CD4-positive, alpha-beta T cell (primary cell): ENCODE measurements at regions of chr9 and their contacts with region 1.

Region 1: DNA sequence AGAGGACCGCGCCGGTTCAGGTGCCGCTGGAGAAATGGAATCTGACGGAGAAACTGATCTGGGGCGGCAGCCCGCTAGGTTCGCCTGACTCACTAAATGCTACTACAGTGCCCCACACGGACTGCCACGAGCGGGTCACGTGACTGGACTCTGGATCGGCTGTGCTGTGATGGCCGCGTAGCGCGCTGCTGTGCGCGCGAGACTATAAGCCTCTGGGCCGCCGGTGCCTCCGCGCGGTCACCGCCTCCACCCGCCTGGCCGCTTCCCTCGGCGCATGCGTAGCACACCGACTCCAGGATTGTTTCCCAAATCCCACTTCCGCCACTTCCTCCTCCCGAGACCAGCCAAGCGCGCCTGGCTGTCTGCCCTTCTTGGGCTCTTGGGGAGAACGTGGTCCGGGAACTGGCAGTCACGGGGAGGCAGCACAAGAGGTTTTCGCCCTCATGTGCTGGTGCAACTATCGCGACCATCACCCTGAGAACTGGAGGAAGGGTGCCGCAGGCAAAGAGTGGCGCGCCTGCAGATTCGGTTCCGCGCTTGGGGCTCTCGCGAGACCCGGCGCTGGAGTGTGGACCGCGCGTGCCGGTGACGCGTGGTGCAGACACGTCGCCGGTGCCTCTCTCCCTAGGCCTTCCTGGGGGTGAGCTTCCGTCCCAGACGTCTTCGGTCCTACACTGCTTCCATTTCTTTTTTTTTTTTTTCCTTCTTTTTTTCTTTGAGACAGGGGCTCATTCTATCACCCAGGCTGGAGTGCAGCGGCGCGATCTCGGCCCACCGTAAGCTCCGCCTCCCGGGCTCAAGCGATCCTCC is 35.8 kb upstream of the GLDC start:
- DNase-seq: peak; percentile 82 to 97 (median 88)
- ATAC-seq: peak; percentile 90
- H3K4me3 ChIP-seq: peak overlapping the region; percentile 85
- H3K4me3 Mint-ChIP-seq: peak overlapping the region; percentile 89
- H3K27ac ChIP-seq: peak overlapping the region; percentile 96 to 98
- H3K27ac Mint-ChIP-seq: peak overlapping the region; percentile 99
- H3K4me1 ChIP-seq: peaks cover 23% of the 10 kb centered on the region
- H3K4me1 Mint-ChIP-seq: peaks cover 17% of the 10 kb centered on the region
- H3K27me3 ChIP-seq: no peaks in the 10 kb centered on the region
- H3K27me3 Mint-ChIP-seq: no peaks in the 10 kb centered on the region
- CTCF ChIP-seq: no peak

Region 2: DNA sequence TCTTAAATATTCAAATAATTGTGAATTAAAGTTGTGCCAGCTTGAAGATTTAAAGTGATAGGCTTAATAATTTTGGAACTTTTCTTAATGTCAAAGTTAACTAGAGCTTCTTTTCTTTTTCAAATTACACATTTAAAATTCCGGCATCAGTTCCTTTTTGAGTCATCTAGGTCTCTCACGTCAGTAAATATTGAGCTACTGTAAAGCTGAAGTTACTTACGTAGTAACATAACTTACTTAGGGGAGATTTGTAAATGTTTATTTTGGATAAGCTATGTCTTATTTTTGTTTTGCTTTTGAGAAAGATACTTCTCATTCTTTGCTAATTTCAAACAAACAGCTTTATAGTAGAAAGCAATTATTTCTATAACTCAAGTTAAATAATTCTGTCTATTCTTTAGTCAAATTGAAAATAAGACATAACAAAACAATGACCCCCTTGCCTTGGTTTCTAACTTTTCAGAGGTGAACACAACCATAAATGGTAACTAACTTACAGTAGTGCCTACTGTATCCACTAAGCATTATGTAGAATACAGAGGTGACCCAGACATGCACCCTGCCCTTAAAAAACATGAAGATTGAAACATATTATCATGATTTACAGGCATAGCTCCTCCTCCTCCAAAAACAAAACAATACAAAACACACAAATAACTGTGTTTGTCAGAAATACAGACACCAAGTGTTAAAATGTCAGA is 1201.2 kb before region 1 on chr9:
- CTCF ChIA-PET with region 1: no interaction called
- POLR2A ChIA-PET with region 1: no interaction called
- intact Hi-C with region 1: no loop called
- DNase-seq: no peak
- ATAC-seq: no peak
- H3K4me3 ChIP-seq: no peak overlapping the region
- H3K4me3 Mint-ChIP-seq: no peak overlapping the region
- H3K27ac ChIP-seq: no peak overlapping the region
- H3K27ac Mint-ChIP-seq: no peak overlapping the region
- H3K4me1 ChIP-seq: no peaks in the 10 kb centered on the region
- H3K4me1 Mint-ChIP-seq: no peaks in the 10 kb centered on the region
- H3K27me3 ChIP-seq: no peaks in the 10 kb centered on the region
- H3K27me3 Mint-ChIP-seq: no peaks in the 10 kb centered on the region
- CTCF ChIP-seq: no peak

Region 3: DNA sequence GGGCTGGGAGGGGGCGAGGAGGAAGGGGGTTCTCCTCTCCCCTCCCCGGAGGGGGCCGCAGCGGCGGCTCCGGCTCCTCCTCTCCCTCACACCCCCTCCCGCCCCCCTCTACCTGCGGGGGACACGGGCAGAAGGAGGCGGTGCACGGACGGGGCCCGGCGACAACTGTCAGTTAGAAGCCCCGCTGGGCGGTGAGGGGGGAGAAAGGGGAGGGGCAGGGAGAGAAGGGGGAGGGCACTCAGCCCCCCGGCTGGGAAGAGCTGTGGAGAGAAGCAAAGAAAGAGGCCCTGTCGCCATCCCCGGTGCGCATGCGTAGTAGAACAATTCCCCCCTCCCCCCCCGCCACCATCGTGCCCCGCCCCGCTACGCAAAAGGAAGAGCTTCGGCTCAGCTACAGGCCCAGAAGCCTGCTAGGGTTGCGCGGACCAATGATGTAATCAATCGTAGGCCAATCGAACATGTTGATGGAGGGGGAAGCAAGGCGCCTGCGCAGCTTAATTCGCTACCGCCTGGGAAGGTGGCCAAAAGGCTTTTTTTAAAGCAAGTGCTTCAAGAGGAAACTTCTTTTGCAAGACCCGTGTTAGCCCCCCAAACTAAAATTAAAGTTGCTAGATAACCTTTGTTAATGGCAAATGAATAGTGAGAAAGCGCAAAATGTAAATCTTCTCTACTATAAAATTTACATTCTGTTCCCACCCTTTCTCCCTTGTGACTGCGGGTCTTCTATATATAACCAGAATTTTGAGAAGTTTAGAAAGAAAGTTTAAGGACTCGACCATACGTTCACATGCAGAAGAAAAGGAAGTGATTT is 673.0 kb before region 1 on chr9:
- CTCF ChIA-PET with region 1: no interaction called
- POLR2A ChIA-PET with region 1: interaction called, 8 read pairs
- intact Hi-C with region 1: loop called in 1 of 2 experiments (anchors 2 kb)
- DNase-seq: peak; percentile 88 to 99 (median 92)
- ATAC-seq: peak; percentile 70
- H3K4me3 ChIP-seq: peak overlapping the region; percentile 87
- H3K4me3 Mint-ChIP-seq: peak overlapping the region; percentile 91
- H3K27ac ChIP-seq: peak overlapping the region; percentile 91 to 95
- H3K27ac Mint-ChIP-seq: peak overlapping the region; percentile 97
- H3K4me1 ChIP-seq: peaks cover 11% of the 10 kb centered on the region
- H3K4me1 Mint-ChIP-seq: peaks cover 70% of the 10 kb centered on the region
- H3K27me3 ChIP-seq: no peaks in the 10 kb centered on the region
- H3K27me3 Mint-ChIP-seq: no peaks in the 10 kb centered on the region
- CTCF ChIP-seq: no peak

Region 4: DNA sequence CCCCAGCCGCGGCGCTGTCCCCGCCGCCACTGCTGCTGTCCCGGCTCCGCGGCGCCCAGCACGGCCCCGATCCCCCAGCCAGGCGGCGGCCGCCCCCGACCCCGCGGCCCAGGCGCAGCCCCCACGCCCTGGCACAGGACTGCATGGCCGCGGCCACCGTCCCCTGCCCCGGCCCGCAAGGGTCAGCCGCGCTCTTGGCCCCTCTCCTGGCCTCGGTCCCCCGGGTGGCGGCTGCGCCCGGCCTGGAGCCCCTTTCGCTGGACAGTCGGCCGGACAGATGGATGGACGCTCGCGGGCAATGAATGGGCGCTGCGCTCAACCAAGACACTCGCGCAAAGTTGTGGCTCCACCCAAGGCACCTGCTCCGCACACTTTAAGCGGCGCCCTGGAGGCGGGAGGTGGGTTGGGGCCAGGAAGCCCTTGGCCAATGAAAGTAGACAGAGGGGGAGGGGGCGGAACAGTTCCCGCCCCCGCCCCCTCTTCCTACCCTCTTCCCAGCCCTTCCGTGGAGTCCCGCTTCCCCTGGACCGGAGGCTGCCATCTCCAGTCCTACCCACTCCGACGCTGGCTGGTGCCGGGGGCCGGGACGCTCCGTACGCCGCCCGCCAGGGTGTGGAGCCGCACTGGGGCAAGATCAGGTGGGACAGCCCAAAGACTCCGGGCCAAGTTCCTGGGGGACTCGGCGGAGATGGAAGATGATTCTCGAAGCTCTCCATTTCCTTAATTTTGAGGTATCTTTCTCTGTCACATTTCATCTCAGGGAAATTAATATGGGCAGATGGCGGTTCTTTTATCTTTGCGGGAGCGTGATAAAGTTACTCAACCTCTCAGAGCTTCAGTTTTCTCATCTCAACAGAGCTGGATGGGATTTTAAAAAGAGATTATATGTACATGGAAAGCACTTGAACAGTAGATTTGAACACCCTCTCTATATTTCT is 35.7 kb before region 1 on chr9 and contains the start of gene GLDC:
- CTCF ChIA-PET with region 1: no interaction called
- POLR2A ChIA-PET with region 1: interaction called, 5 read pairs
- intact Hi-C with region 1: loop called in 1 of 2 experiments (anchors 5 kb)
- DNase-seq: peak in 12 of 14 experiments; percentile 3 to 64 (median 33)
- ATAC-seq: peak; percentile 68
- H3K4me3 ChIP-seq: peak within 1 kb of the TSS; percentile 66
- H3K4me3 Mint-ChIP-seq: peak within 1 kb of the TSS; percentile 87
- H3K27ac ChIP-seq: no peak within 1 kb of the TSS
- H3K27ac Mint-ChIP-seq: no peak within 1 kb of the TSS
- H3K4me1 ChIP-seq: peaks cover 24% of the 10 kb centered on the region
- H3K4me1 Mint-ChIP-seq: peaks cover 22% of the 10 kb centered on the region
- H3K27me3 ChIP-seq: peaks cover 34 to 41% of the 10 kb centered on the region in 2 experiments
- H3K27me3 Mint-ChIP-seq: peaks cover 68% of the 10 kb centered on the region
- CTCF ChIP-seq: no peak
- total RNA-seq, gene GLDC: not detected

Region 5: DNA sequence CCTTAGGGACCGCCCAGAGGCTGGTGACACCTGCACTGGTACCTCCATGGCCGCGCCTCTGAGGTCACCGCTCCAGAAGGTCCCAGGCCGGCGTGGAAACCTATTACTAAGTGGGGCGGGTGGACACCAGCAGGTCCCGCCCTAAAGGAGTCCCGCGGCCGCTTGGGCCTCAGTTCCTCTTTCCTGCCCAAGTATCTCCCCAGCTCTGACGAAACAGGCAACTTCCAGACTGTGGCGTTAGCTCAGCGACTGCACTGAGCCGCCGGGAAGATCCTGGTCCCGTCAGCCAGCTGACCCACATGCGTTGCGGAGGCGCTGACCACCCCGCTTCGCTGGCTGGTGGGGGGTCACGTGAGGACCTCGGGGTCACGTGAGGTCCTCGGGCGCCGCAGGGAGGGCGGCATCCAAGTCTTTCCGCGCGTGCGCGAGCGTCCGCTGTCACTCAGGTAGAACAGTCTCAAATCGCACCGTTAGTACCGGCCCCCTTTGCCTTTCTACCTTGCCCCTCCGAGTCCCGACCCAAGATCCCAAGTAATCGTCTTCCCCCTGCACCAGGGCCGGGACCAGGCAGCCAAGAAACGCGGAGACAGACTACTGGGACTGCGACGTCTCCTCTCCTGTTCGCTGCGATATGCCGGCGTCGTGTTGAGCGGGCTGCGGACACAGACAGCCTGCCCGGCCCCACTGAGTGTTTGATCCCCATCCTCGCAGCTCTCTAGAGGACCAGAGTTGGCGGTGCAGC is 22.7 kb after region 1 on chr9:
- CTCF ChIA-PET with region 1: interaction called, 4 read pairs
- POLR2A ChIA-PET with region 1: interaction called, 61 read pairs
- intact Hi-C with region 1: loop called (anchors 2 kb)
- DNase-seq: peak; percentile 72 to 94 (median 81)
- ATAC-seq: peak; percentile 85
- H3K4me3 ChIP-seq: peak overlapping the region; percentile 67
- H3K4me3 Mint-ChIP-seq: peak overlapping the region; percentile 92
- H3K27ac ChIP-seq: peak overlapping the region; percentile 90 to 92
- H3K27ac Mint-ChIP-seq: peak overlapping the region; percentile 91
- H3K4me1 ChIP-seq: peaks cover 16% of the 10 kb centered on the region
- H3K4me1 Mint-ChIP-seq: peaks cover 18% of the 10 kb centered on the region
- H3K27me3 ChIP-seq: no peaks in the 10 kb centered on the region
- H3K27me3 Mint-ChIP-seq: no peaks in the 10 kb centered on the region
- CTCF ChIP-seq: no peak

Region 6: DNA sequence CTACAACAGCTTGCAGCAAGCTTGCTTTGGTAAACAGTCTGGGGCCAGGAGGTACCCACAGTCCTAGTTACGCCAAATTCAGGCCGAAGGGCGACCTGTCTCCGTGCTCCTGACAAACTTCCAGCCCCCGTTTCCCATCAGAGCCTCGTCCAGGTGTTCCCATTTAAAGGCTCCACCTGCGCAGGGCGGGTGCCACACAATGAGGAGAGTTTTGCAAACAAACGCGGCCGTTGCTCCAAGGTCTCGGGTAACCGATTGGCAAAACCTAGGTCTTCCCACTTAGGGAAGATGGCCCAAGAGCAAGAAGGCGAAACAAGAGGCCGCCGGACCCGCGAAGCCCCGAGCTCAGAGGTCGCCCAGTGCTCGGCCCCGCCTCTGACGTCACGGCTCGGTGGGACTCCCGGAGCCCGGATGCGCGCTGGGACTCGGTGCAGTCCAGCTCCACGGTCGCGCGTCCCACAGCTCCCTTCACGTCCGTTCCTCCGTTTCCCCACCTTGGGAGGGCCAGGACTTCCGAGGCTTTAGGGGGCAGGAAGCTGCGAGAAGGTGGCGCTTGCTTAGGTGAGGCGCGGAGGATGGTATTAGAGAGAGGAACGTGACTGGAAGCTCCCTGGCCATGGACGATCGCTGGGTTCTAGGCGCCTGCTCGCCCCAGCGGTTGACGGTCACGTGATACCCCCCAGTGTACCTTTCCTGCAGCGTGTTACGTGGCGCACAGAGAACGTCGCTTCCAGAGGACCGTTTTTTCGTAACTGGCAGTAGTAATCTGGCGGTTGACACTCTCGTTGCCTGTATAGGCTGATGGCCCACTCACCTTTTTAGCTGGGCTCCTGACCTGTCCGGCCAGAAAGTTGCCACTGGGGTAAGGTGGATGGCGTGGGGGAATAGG is 34.6 kb after region 1 on chr9:
- CTCF ChIA-PET with region 1: no interaction called
- POLR2A ChIA-PET with region 1: interaction called, 19 read pairs
- intact Hi-C with region 1: no loop called
- DNase-seq: peak; percentile 40 to 83 (median 56)
- ATAC-seq: peak; percentile 88
- H3K4me3 ChIP-seq: peak overlapping the region; percentile 72
- H3K4me3 Mint-ChIP-seq: peak overlapping the region; percentile 92
- H3K27ac ChIP-seq: peak overlapping the region in 1 of 2 donors; percentile 50
- H3K27ac Mint-ChIP-seq: peak overlapping the region; percentile 87
- H3K4me1 ChIP-seq: peaks cover 17% of the 10 kb centered on the region
- H3K4me1 Mint-ChIP-seq: peaks cover 6% of the 10 kb centered on the region
- H3K27me3 ChIP-seq: no peaks in the 10 kb centered on the region
- H3K27me3 Mint-ChIP-seq: no peaks in the 10 kb centered on the region
- CTCF ChIP-seq: no peak

Region 7: DNA sequence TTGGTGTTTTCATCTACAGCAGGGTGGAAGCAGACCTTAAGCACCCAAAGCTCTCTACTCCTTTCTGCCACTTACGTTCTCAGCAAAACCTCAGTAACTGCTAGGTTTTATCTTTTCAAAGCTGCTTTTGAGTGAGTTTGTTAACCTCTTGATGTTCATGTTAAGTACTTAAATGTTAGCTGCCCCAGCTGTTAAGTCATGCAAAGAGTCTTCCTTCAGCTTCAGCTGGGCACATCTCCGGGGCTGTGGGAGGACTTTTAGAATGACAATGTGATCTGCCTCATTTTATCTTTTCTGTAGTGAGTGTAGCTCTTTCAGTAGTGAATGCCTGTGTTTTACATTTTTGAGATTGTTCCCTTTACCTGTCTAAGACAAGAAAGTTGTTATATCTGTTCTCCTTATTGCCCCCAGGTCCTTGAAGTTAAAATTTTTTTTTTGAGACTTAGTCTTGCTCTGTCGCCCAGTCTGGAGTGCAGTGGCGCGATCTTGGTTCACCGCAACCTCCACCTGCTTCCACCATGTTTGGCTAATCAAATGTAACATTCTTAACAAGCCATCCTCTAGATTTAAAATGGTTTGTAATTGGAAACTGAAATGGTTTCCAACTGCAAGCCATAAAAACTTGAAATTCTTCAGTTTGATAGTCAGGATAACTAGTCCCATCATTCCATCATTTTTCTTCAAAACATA is 96.0 kb after region 1 on chr9:
- CTCF ChIA-PET with region 1: no interaction called
- POLR2A ChIA-PET with region 1: no interaction called
- intact Hi-C with region 1: no loop called
- DNase-seq: no peak
- ATAC-seq: no peak
- H3K4me3 ChIP-seq: no peak overlapping the region
- H3K4me3 Mint-ChIP-seq: peak overlapping the region; percentile 12
- H3K27ac ChIP-seq: no peak overlapping the region
- H3K27ac Mint-ChIP-seq: no peak overlapping the region
- H3K4me1 ChIP-seq: peaks cover 41% of the 10 kb centered on the region
- H3K4me1 Mint-ChIP-seq: peaks cover 61% of the 10 kb centered on the region
- H3K27me3 ChIP-seq: no peaks in the 10 kb centered on the region
- H3K27me3 Mint-ChIP-seq: no peaks in the 10 kb centered on the region
- CTCF ChIP-seq: no peak

Region 8: DNA sequence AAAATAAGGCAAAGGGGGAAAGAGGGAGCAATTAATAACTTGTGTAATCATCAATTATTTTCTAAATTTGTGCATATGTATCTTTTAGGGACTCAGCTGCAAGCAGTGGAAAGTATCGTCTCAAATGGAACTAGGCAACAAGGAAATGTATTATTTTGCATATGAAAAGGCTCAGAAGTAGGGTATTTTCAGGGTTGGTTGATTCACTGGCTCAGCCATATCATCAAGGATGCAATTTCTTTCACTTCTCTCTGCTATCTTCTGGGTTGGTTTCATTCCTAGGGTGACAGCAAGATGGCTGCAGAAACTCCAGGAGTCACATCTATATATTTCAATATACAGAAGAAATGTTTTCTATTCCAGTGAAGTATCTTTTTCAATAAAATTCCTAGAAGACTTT is 608.4 kb after region 1 on chr9:
- CTCF ChIA-PET with region 1: no interaction called
- POLR2A ChIA-PET with region 1: no interaction called
- intact Hi-C with region 1: no loop called
- DNase-seq: no peak
- ATAC-seq: no peak
- H3K4me3 ChIP-seq: no peak overlapping the region
- H3K4me3 Mint-ChIP-seq: no peak overlapping the region
- H3K27ac ChIP-seq: no peak overlapping the region
- H3K27ac Mint-ChIP-seq: no peak overlapping the region
- H3K4me1 ChIP-seq: no peaks in the 10 kb centered on the region
- H3K4me1 Mint-ChIP-seq: no peaks in the 10 kb centered on the region
- H3K27me3 ChIP-seq: no peaks in the 10 kb centered on the region
- H3K27me3 Mint-ChIP-seq: peaks cover 13% of the 10 kb centered on the region
- CTCF ChIP-seq: no peak